BJ (cell line): ENCODE measurements at regions of chr5 and their contacts with region 1.

Region 1: DNA sequence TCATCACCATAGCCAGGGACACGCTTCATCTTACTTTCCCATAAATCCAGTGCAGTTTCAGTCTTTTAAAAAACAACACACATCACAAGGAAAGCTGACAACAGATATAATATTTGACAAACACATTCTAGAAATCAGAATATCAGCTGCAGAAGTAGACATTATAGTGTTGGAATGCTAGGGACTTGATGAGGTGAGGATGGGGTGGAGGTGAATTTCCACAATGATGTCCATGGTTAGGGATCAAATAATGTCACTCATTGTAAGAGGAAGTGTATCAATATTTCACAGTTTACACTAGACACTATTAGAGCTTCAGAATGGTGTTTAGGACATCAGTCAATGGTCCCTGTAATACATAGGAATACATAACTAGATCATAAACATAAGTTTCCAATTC is 7.0 kb downstream of the FST start:
- DNase-seq: no peak
- H3K4me3 ChIP-seq: no peak overlapping the region
- H3K27me3 ChIP-seq: no peaks in the 10 kb centered on the region
- CTCF ChIP-seq: no peak

Region 2: GRCh38 chr5:53469946-53470687 is 17.3 kb before region 1 on chr5:
- CTCF ChIA-PET with region 1: no interaction called
- POLR2A ChIA-PET with region 1: no interaction called
- DNase-seq: no peak
- H3K4me3 ChIP-seq: no peak overlapping the region
- H3K27me3 ChIP-seq: no peaks in the 10 kb centered on the region
- CTCF ChIP-seq: no peak

Region 3: DNA sequence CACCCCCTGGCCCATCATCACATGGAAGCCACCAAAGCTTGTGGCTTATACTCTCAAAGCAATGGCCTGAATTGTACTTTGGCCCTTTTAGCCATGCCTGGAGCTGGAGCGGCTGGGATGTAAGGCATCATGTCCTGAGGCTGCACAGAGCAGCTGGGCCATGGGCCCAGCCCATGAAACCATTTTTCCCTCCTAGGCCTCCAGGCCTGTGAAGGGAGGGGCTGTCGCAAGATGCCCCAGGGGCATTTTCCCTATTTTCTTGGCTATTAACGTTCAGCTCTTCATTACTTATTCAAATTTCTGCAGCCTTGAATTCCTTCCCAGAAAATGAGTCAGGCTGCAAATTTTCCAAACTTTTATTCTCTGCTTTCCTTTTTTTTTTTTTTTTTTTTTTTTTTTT is 20.7 kb after region 1 on chr5:
- CTCF ChIA-PET with region 1: no interaction called
- POLR2A ChIA-PET with region 1: interaction called, 25 read pairs
- DNase-seq: no peak
- H3K4me3 ChIP-seq: no peak overlapping the region
- H3K27me3 ChIP-seq: no peaks in the 10 kb centered on the region; the same call in 1 of the 2 replicates
- CTCF ChIP-seq: no peak